H1 (cell line): ENCODE measurements at regions of chr5 and their contacts with region 1.

Region 1: DNA sequence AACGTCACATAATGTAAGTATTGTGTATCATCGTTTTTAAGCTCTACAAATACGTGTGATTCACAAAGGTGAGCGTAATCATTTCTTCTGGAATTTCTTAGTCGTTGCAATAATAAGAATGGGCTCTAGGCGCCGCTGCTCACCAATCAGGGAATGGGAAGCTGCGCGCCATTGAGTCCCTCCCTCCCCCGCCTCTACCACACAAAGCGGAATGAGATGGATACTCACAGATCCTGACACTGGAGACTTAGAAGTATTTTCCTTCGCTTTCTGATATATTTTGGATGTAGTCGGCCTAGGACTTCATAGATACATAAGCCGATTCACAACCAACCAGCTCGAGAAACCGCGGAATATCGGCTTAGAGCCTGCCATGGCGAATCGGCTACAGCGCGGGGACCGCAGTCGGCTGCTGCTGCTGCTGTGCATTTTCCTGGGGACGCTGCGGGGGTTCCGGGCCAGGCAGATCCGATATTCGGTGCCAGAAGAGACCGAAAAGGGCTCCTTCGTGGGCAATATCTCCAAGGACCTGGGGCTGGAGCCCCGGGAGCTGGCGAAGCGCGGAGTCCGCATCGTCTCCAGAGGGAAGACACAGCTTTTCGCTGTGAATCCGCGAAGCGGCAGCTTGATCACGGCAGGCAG is at the start of gene PCDHGA11:
- DNase-seq: peak in 1 of 2 experiments; percentile 91
- H3K4me3 ChIP-seq: peak within 1 kb of the TSS; percentile 15 to 52 (median 32); a peak in 6 of 8 replicates
- H3K27ac ChIP-seq: no peak within 1 kb of the TSS
- H3K4me1 ChIP-seq: no peaks in the 10 kb centered on the region; a peak in 1 of 7 replicates
- H3K27me3 ChIP-seq: peaks cover 0 to 12% (median 6%) of the 10 kb centered on the region in 4 experiments; a peak in 4 of 7 replicates
- CTCF ChIP-seq: peak; percentile 59 to 77 (median 75)
- EP300 ChIP-seq: no peak
- POLR2A ChIP-seq: no peak
- RAD21 ChIP-seq: peak; percentile 88 to 90
- total RNA-seq, gene PCDHGA11: 8.2 and 8.3 TPM in 2 replicates

Region 2: DNA sequence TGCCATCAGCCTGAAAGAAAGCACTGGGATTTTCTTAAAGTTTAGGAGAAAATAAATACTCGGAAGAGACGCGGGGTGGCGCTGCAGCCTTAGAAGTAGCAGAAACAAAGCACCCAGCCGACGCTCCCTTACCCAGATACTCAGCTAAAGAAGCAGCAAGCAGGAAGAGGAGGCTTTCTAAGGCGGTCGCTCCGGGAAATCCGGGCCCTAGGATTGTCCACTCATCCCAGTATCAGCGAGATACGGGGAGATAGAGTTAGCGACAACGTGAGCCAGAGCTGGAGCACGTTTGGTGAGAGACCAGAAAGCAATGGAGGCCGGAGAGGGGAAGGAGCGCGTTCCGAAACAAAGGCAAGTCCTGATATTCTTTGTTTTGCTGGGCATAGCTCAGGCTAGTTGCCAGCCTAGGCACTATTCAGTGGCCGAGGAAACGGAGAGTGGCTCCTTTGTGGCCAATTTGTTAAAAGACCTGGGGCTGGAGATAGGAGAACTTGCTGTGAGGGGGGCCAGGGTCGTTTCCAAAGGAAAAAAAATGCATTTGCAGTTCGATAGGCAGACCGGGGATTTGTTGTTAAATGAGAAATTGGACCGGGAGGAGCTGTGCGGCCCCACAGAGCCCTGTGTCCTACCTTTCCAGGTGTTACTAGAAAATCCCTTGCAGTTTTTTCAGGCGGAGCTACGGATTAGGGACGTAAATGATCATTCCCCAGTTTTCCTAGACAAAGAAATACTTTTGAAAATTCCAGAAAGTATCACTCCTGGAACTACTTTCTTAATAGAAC is 326.3 kb before region 1 on chr5 and contains the start of gene PCDHB2:
- CTCF ChIA-PET with region 1: no interaction called
- POLR2A ChIA-PET with region 1: no interaction called
- DNase-seq: peak; percentile 75 to 84
- H3K4me3 ChIP-seq: peak within 1 kb of the TSS; percentile 80 to 99 (median 92)
- H3K27ac ChIP-seq: peak within 1 kb of the TSS; percentile 91
- H3K4me1 ChIP-seq: no peaks in the 10 kb centered on the region; a peak in 2 of 7 replicates
- H3K27me3 ChIP-seq: no peaks in the 10 kb centered on the region
- CTCF ChIP-seq: peak; percentile 56 to 85 (median 83)
- EP300 ChIP-seq: no peak
- POLR2A ChIP-seq: peak; percentile 77 to 96
- RAD21 ChIP-seq: peak; percentile 76 to 82
- total RNA-seq, gene PCDHB2: 25.6 and 28.8 TPM in 2 replicates

Region 3: DNA sequence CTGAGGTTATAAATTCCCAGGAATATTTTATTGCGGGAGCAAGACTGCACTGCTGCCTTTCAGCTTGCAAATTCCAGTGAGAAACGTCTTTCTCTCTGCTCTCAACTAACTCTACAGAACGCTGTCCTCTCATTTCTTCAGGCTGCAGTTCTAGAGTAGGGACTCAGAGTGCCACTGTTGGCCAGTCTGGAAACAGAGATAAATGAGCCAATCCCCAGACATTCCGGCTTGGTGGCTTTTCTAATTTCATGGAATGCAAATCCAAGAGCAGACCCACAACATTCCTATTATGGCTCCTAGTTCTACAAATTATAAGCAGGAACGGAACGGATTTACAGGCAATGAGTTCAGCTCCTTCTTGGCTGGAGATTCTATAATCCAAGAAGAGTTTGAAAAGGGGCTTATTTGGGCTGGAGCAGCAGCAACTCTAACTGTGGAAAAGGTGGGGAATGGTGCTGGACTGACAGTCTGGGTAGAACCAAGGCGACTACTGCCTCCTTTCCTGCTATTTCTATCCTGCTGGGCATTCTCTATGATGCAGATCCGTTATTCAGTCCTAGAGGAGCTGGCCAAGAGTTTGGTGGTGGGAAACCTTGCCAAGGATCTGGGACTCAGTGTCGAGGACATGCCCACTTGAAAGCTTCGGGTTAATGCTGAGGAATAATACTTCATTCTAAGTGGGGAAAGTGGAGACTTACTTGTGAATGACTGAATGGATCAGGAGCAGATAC is 18.6 kb after region 1 on chr5:
- CTCF ChIA-PET with region 1: interaction called, 67 read pairs
- POLR2A ChIA-PET with region 1: no interaction called
- DNase-seq: no peak
- H3K4me3 ChIP-seq: no peak overlapping the region
- H3K27ac ChIP-seq: no peak overlapping the region
- H3K4me1 ChIP-seq: no peaks in the 10 kb centered on the region
- H3K27me3 ChIP-seq: no peaks in the 10 kb centered on the region
- CTCF ChIP-seq: no peak
- EP300 ChIP-seq: no peak
- POLR2A ChIP-seq: no peak
- RAD21 ChIP-seq: peak in 1 of 2 experiments; percentile 33; a peak in 2 of 4 replicates

Region 4: GRCh38 chr5:141484641-141485311 is 63.8 kb after region 1 on chr5 and contains the start of gene PCDHGC4:
- CTCF ChIA-PET with region 1: interaction called, 1,236 read pairs
- POLR2A ChIA-PET with region 1: no interaction called
- DNase-seq: peak in 1 of 2 experiments; percentile 84
- H3K4me3 ChIP-seq: peak within 1 kb of the TSS; percentile 56 to 78 (median 69)
- H3K27ac ChIP-seq: peak within 1 kb of the TSS; percentile 5; the same call in 1 of the 2 replicates
- H3K4me1 ChIP-seq: peaks cover 5 to 20% (median 12%) of the 10 kb centered on the region in 4 experiments
- H3K27me3 ChIP-seq: peaks cover 7 to 19% (median 16%) of the 10 kb centered on the region in 4 experiments
- CTCF ChIP-seq: peak in 1 of 3 experiments; percentile 5; a peak in 1 of 4 replicates
- EP300 ChIP-seq: no peak
- POLR2A ChIP-seq: peak in 1 of 2 experiments; percentile 57; a peak in 1 of 3 replicates
- RAD21 ChIP-seq: peak in 1 of 2 experiments; percentile 10; a peak in 1 of 4 replicates
- total RNA-seq, gene PCDHGC4: 2.4 and 2.6 TPM in 2 replicates

Region 5: GRCh38 chr5:141618804-141619554 is 198.0 kb after region 1 on chr5 and contains the start of gene DIAPH1:
- CTCF ChIA-PET with region 1: no interaction called
- POLR2A ChIA-PET with region 1: no interaction called
- DNase-seq: peak; percentile 92 to 94
- H3K4me3 ChIP-seq: peak within 1 kb of the TSS; percentile 74 to 97 (median 84)
- H3K27ac ChIP-seq: peak within 1 kb of the TSS; percentile 77
- H3K4me1 ChIP-seq: peaks cover 2 to 7% (median 4%) of the 10 kb centered on the region in 4 experiments; a peak in 3 of 7 replicates
- H3K27me3 ChIP-seq: no peaks in the 10 kb centered on the region
- CTCF ChIP-seq: peak; percentile 83 to 97 (median 87)
- EP300 ChIP-seq: peak in 1 of 2 experiments; percentile 99; a peak in 2 of 3 replicates
- POLR2A ChIP-seq: peak in 1 of 2 experiments; percentile 74; a peak in 1 of 3 replicates
- RAD21 ChIP-seq: peak; percentile 63 to 74
- total RNA-seq, gene DIAPH1: 107 and 114 TPM in 2 replicates